ENCODE measurements at regions of chr21 and their contacts with region 1.

Region 1: DNA sequence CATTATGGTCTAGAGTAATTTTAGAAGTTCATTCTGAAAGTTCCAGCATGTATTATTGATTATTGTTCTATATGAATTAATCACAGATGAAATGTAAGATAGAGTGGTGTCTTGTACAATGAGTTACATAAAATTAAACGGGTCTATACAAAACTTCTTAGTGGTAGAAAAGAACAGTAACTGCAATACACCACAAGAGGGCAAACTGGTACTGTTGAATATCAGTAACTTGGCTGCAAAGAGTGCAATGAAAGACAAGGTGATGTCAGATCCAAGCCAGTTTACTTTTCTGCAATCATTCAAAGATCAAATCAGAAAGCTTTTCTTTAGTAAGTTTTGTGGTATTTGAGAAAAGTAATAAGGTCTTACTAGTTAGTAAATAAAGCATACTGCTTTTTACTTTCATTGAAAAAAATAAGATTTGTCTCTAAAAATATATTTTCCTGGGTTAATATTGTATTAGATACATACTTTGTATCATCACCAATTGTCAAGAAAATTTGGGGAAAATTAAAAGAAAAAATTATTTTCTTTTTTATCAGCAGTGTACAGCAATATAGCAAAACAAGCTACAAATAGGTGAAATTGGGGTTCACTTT is 66.4 kb upstream of the BTG3 start:
- DNase-seq: no peak

Region 2: GRCh38 chr21:17726047-17726830 is 47.1 kb after region 1 on chr21:
- intact Hi-C with region 1: no loop called
- DNase-seq: no peak

Region 3: GRCh38 chr21:17903029-17903806 is 224.1 kb after region 1 on chr21:
- intact Hi-C with region 1: loop called (anchors 2 kb)
- DNase-seq: no peak